Naive thymus-derived CD4-positive, alpha-beta T cell (primary cell): ENCODE measurements at regions of chr19 and their contacts with region 1.

Region 1: GRCh38 chr19:49224856-49225255 is 67.3 kb downstream of the TRPM4 start:
- DNase-seq: peak in 3 of 9 donors; percentile 15 to 33 (median 24)
- ATAC-seq: peak; percentile 56
- H3K4me3 ChIP-seq: no peak overlapping the region
- H3K4me3 Mint-ChIP-seq: no peak overlapping the region
- H3K27ac ChIP-seq: no peak overlapping the region
- H3K27ac Mint-ChIP-seq: no peak overlapping the region
- H3K4me1 ChIP-seq: peaks cover 4 to 9% of the 10 kb centered on the region in 2 donors
- H3K4me1 Mint-ChIP-seq: peaks cover 5 to 7% (median 6%) of the 10 kb centered on the region in 7 donors
- H3K27me3 ChIP-seq: no peaks in the 10 kb centered on the region
- H3K27me3 Mint-ChIP-seq: peaks cover 2 to 6% (median 4%) of the 10 kb centered on the region in 5 donors

Region 2: DNA sequence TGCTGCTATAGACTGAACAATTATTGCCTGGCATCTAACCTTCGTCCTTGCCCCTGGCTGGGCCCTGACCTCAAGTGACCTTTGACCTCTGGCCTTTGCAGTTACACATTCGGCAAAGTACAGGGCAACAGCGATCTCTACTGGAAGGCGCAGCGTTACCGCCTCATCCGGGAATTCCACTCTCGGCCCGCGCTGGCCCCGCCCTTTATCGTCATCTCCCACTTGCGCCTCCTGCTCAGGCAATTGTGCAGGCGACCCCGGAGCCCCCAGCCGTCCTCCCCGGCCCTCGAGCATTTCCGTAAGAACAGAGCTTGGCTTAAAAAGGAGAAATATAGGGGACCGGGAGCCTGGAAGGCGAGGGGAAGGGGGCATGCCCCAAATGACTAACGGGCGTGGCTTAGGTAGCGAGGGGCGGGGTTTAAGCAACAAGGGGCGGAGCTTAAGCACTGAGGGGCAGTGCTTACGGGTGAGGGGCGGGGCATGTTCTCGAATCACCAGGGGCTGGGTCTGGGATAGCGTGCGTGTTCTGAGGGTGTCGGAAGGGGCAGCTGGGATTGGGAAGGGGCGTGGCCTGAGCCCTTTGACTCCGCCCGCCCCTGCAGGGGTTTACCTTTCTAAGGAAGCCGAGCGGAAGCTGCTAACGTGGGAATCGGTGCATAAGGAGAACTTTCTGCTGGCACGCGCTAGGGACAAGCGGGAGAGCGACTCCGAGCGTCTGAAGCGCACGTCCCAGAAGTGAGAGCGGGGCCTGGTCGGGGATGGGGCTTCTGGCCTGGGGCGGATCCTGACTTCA is 14.6 kb before region 1 on chr19:
- CTCF ChIA-PET with region 1: no interaction called
- POLR2A ChIA-PET with region 1: no interaction called
- intact Hi-C with region 1: no loop called
- DNase-seq: peak in 8 of 9 donors; percentile 20 to 54 (median 30)
- ATAC-seq: peak; percentile 73
- H3K4me3 ChIP-seq: no peak overlapping the region
- H3K4me3 Mint-ChIP-seq: peak overlapping the region in 4 of 10 donors; percentile 29 to 69 (median 55)
- H3K27ac ChIP-seq: no peak overlapping the region
- H3K27ac Mint-ChIP-seq: peak overlapping the region in 2 of 9 donors; percentile 33 to 48
- H3K4me1 ChIP-seq: no peaks in the 10 kb centered on the region
- H3K4me1 Mint-ChIP-seq: peaks cover 0 to 14% (median 7%) of the 10 kb centered on the region in 7 donors
- H3K27me3 ChIP-seq: no peaks in the 10 kb centered on the region
- H3K27me3 Mint-ChIP-seq: peaks cover 0 to 2% (median 0%) of the 10 kb centered on the region in 5 donors

Region 3: GRCh38 chr19:49272184-49272583 is 47.3 kb after region 1 on chr19:
- CTCF ChIA-PET with region 1: no interaction called
- POLR2A ChIA-PET with region 1: no interaction called
- intact Hi-C with region 1: loop called in 1 of 2 experiments (anchors 2 kb)
- DNase-seq: no peak
- ATAC-seq: no peak
- H3K4me3 ChIP-seq: no peak overlapping the region
- H3K4me3 Mint-ChIP-seq: no peak overlapping the region
- H3K27ac ChIP-seq: no peak overlapping the region
- H3K27ac Mint-ChIP-seq: no peak overlapping the region
- H3K4me1 ChIP-seq: no peaks in the 10 kb centered on the region
- H3K4me1 Mint-ChIP-seq: peaks cover 0 to 2% (median 0%) of the 10 kb centered on the region in 7 donors
- H3K27me3 ChIP-seq: no peaks in the 10 kb centered on the region
- H3K27me3 Mint-ChIP-seq: peaks cover 0 to 26% (median 15%) of the 10 kb centered on the region in 5 donors

Region 4: DNA sequence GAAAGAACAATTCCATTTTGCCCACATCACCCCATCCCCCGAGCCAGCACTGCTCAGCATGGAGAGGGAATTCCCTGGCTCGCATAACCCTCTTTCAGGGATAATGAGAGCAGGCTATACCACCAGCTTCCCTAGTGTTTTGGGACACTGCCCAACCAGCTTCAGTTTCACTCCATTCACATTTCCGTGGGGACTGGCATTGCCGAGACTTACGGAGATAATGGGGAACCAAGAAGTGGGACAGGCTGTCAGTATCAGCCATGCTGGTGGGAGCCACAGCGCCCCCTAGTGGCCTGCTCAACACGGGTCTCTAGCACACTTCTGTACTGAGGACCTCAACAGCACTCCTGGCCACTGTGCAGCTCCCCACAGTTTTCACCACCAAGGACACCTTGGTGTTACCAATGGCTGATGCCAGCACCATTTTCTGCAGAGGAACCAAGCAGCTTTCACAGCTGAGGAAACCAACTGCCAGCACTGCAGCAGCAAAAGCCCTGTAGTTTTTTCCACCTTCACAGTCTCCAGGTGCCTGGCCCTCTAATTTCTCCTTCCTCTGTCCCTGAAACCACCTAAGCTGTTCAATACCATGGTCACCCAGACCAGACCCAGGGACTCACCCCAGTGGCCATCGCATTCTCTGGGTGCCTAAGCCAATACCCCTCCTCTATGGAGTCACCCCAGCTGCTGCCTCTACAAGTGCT is 76.5 kb after region 1 on chr19:
- CTCF ChIA-PET with region 1: interaction called, 3 read pairs
- POLR2A ChIA-PET with region 1: no interaction called
- intact Hi-C with region 1: loop called (anchors 1 to 2 kb)
- DNase-seq: peak; percentile 45 to 82 (median 66)
- ATAC-seq: peak; percentile 99
- H3K4me3 ChIP-seq: no peak overlapping the region
- H3K4me3 Mint-ChIP-seq: peak overlapping the region in 2 of 10 donors; percentile 15 to 25
- H3K27ac ChIP-seq: no peak overlapping the region
- H3K27ac Mint-ChIP-seq: peak overlapping the region in 1 of 9 donors; percentile 36
- H3K4me1 ChIP-seq: no peaks in the 10 kb centered on the region
- H3K4me1 Mint-ChIP-seq: peaks cover 0 to 8% (median 4%) of the 10 kb centered on the region in 7 donors
- H3K27me3 ChIP-seq: no peaks in the 10 kb centered on the region
- H3K27me3 Mint-ChIP-seq: peaks cover 0 to 17% (median 0%) of the 10 kb centered on the region in 5 donors

Region 5: DNA sequence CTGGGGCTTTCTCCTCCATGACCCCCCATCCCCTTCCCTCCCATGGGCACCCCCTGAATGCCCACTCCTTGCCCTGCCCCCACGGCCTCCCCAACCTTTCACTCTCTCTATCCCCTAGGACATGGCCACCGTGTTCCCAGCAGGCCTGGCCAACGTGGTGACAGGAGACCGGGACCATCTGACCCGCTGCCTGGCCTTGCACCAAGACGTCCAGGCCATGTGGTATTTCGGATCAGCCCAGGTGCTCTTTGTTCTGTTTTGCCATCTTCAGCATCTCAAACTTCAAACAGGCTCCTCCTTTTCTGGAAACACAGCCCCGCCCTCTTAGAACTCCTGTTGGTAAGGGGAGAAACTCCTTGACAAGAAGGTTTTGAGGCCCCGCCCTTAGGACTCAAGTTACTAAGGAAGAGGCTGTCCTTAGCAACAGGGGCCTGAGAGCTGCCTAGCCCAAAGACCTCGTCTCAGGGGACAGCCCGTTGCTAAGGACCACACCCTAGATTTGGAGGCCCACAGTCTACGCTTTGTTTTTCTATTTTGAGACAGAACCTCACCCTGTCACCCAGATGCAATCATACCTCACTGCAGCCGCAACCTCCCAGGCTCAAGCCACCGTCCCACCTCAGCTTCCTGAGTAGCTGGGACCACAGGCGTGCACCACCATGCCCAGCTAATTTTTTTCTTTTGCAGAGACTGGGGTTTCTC is 244.0 kb after region 1 on chr19:
- CTCF ChIA-PET with region 1: no interaction called
- POLR2A ChIA-PET with region 1: no interaction called
- intact Hi-C with region 1: loop called in 1 of 2 experiments (anchors 2 kb)
- DNase-seq: peak; percentile 59 to 98 (median 95)
- ATAC-seq: peak; percentile 87
- H3K4me3 ChIP-seq: peak overlapping the region; percentile 10
- H3K4me3 Mint-ChIP-seq: peak overlapping the region; percentile 73 to 91 (median 81)
- H3K27ac ChIP-seq: peak overlapping the region; percentile 97
- H3K27ac Mint-ChIP-seq: peak overlapping the region; percentile 94 to 100 (median 100)
- H3K4me1 ChIP-seq: peaks cover 55 to 59% of the 10 kb centered on the region in 2 donors
- H3K4me1 Mint-ChIP-seq: peaks cover 23 to 56% (median 40%) of the 10 kb centered on the region in 7 donors
- H3K27me3 ChIP-seq: no peaks in the 10 kb centered on the region
- H3K27me3 Mint-ChIP-seq: no peaks in the 10 kb centered on the region